Activated CD4-positive, alpha-beta T cell treated with anti-CD3 and anti-CD28 coated beads for 36 hours (primary cell): ENCODE measurements at regions of chr16 and their contacts with region 1.

Region 1: DNA sequence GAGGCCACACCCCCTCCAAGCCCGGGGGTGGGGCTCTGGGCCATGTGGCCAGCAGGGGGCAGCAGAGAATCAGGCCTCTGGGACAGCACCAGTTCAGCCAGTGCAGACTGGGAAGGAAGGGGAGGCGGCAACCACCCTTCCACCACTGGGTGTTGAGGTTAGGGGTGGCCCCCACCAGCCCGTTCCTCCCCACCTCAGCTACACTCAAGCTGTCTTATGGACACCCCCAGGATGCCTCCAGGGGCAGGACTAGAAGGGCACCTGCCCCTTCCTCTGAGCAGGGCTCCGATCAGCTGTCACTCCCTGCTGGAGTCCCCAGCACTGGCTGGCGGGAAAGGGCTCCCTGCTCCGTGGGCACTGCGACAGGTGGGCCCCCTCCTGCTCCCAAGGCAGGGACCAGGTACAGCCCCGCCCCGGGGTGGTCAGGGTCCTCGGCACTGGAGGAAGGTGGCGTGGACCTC is 21.8 kb downstream of the KATNB1 start:
- DNase-seq: peak; percentile 93
- ATAC-seq: peak; percentile 98
- H3K4me3 Mint-ChIP-seq: no peak overlapping the region
- H3K27ac Mint-ChIP-seq: no peak overlapping the region
- H3K4me1 Mint-ChIP-seq: peaks cover 2% of the 10 kb centered on the region
- H3K27me3 Mint-ChIP-seq: no peaks in the 10 kb centered on the region

Region 2: GRCh38 chr16:57535680-57536305 is 221.6 kb before region 1 on chr16:
- CTCF ChIA-PET with region 1: no interaction called
- POLR2A ChIA-PET with region 1: no interaction called
- intact Hi-C with region 1: no loop called
- DNase-seq: peak; percentile 97
- ATAC-seq: peak; percentile 80
- H3K4me3 Mint-ChIP-seq: peak overlapping the region; percentile 78
- H3K27ac Mint-ChIP-seq: peak overlapping the region; percentile 94
- H3K4me1 Mint-ChIP-seq: peaks cover 70% of the 10 kb centered on the region
- H3K27me3 Mint-ChIP-seq: no peaks in the 10 kb centered on the region

Region 3: DNA sequence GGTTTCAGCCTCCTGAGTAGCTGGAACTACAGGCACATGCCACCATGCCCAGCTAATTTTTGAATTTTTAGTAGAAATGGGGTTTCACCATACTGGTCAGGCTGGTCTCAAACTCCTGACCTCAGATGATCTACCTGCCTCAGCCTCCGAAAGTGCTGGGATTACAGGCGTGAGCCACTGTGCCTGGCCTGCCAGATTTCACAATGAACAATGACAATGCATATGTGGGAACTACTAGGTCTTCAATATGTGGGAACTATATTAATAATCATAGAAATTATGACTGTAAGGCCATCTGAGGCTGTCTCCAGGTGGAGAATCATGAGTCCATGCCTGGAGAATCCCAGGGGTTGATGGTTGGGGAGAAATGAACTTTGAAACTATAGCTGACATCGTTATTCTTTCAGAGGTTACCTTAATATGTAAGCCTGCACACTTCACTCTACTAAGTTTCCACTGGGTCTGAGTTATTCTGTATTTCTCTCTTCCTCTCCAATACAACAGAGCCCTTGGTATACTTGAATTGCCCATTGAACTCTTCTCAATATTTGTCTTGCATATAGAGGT is 69.9 kb before region 1 on chr16:
- CTCF ChIA-PET with region 1: no interaction called
- POLR2A ChIA-PET with region 1: no interaction called
- intact Hi-C with region 1: no loop called
- DNase-seq: no peak
- ATAC-seq: no peak
- H3K4me3 Mint-ChIP-seq: no peak overlapping the region
- H3K27ac Mint-ChIP-seq: no peak overlapping the region
- H3K4me1 Mint-ChIP-seq: peaks cover 13% of the 10 kb centered on the region
- H3K27me3 Mint-ChIP-seq: no peaks in the 10 kb centered on the region

Region 4: DNA sequence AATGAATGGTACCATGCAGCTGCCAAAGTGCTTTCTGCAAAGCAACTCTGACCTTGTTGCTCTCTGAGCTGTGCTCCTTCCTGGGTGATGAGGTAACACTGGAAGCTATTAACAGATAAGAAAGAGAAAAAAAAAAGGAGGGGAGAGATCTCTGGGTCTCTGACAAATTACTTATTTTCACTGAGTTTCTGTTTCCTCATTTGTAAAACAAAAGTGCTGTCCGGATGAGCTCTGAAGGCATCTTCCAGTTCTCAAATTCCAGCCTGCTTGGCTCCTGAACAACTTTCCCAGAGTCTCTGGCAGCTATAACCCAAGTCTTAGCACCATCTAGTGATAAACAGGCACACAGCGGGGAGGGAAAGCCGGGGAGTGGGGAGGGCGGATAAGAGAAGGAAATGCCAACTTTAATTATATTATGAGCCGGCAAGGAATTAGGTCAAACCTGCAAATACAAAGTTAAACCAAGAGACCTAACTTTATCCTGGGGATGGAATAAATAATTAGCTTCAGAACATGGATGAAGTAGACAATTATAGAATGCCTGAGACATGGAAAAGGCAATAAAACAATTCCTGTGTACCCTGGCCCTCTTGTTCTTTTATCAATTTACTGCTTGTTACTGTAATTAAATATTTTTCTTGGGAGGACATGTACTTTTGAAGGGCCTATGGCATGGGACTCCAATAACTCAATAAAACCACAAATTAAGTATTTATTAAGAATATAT is 106.2 kb after region 1 on chr16:
- CTCF ChIA-PET with region 1: no interaction called
- POLR2A ChIA-PET with region 1: no interaction called
- intact Hi-C with region 1: loop called in 1 of 2 experiments (anchors 1 kb)
- DNase-seq: peak; percentile 16
- ATAC-seq: no peak
- H3K4me3 Mint-ChIP-seq: no peak overlapping the region
- H3K27ac Mint-ChIP-seq: no peak overlapping the region
- H3K4me1 Mint-ChIP-seq: no peaks in the 10 kb centered on the region
- H3K27me3 Mint-ChIP-seq: peaks cover 13% of the 10 kb centered on the region

Region 5: GRCh38 chr16:57871456-57871855 is 114.1 kb after region 1 on chr16:
- CTCF ChIA-PET with region 1: interaction called, 4 read pairs
- POLR2A ChIA-PET with region 1: no interaction called
- intact Hi-C with region 1: loop called in 1 of 2 experiments (anchors 1 kb)
- DNase-seq: no peak
- ATAC-seq: peak; percentile 73
- H3K4me3 Mint-ChIP-seq: no peak overlapping the region
- H3K27ac Mint-ChIP-seq: no peak overlapping the region
- H3K4me1 Mint-ChIP-seq: peaks cover 7% of the 10 kb centered on the region
- H3K27me3 Mint-ChIP-seq: peaks cover 14% of the 10 kb centered on the region